GM12878 (cell line): ENCODE measurements at regions of chr1 and their contacts with region 1.

Region 1: GRCh38 chr1:45686317-45687013 is at the start of gene GPBP1L1:
- DNase-seq: peak; percentile 88
- ATAC-seq: peak; percentile 81
- H3K4me3 ChIP-seq: peak within 1 kb of the TSS; percentile 98
- H3K27ac ChIP-seq: peak within 1 kb of the TSS; percentile 100
- H3K4me1 ChIP-seq: peaks cover 3% of the 10 kb centered on the region; the same call in 1 of the 2 replicates
- H3K27me3 ChIP-seq: no peaks in the 10 kb centered on the region
- CTCF ChIP-seq: no peak
- EP300 ChIP-seq: no peak
- POLR2A ChIP-seq: peak; percentile 85
- RAD21 ChIP-seq: no peak
- polyA plus RNA-seq, gene GPBP1L1: 37.3 to 44.0 TPM

Region 2: GRCh38 chr1:45339789-45340570 is 346.5 kb before region 1 on chr1 and contains the starts of genes MUTYH and TOE1:
- CTCF ChIA-PET with region 1: no interaction called
- POLR2A ChIA-PET with region 1: interaction called, 6 read pairs
- RAD21 ChIA-PET with region 1: no interaction called
- SMC1A ChIA-PET with region 1: no interaction called
- in situ Hi-C with region 1: no loop called
- intact Hi-C with region 1: loop called (anchors 2 kb)
- DNase-seq: peak; percentile 73
- ATAC-seq: peak; percentile 92
- H3K4me3 ChIP-seq: peak within 1 kb of the TSS; percentile 71
- H3K27ac ChIP-seq: peak within 1 kb of the TSS; percentile 93
- H3K4me1 ChIP-seq: peaks cover 11% of the 10 kb centered on the region
- H3K27me3 ChIP-seq: no peaks in the 10 kb centered on the region
- CTCF ChIP-seq: no peak
- EP300 ChIP-seq: no peak
- POLR2A ChIP-seq: peak; percentile 97
- RAD21 ChIP-seq: no peak
- polyA plus RNA-seq, gene MUTYH: 2.5 to 10.5 TPM
- polyA plus RNA-seq, gene TOE1: 33.5 to 38.0 TPM

Region 3: DNA sequence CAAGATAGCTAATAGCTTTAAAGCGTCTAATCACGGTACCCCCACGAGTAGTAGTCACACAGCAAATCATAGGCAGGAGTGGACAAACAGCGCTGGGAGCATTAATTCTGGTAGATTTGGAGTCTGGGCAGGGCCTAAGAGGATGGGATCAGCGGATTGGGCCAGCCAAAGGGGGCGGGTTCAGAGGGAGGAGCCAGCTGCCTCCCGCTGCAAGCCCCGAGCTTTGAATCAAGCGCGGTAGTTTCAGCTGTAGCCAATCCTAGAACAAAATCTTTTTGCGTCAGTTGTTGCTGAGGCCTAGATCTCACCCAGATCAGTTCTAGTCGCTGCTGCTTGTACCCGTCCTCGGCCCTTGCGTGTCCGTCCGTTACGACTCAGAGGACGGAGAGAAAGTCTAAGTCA is 103.2 kb before region 1 on chr1:
- CTCF ChIA-PET with region 1: no interaction called
- POLR2A ChIA-PET with region 1: interaction called, 18 read pairs
- RAD21 ChIA-PET with region 1: interaction called, 16 read pairs
- SMC1A ChIA-PET with region 1: no interaction called
- in situ Hi-C with region 1: no loop called
- intact Hi-C with region 1: loop called (anchors 2 kb)
- DNase-seq: peak; percentile 98
- ATAC-seq: peak; percentile 89
- H3K4me3 ChIP-seq: peak overlapping the region; percentile 94
- H3K27ac ChIP-seq: peak overlapping the region; percentile 97
- H3K4me1 ChIP-seq: peaks cover 12% of the 10 kb centered on the region; the same call in 1 of the 2 replicates
- H3K27me3 ChIP-seq: no peaks in the 10 kb centered on the region
- CTCF ChIP-seq: no peak
- EP300 ChIP-seq: no peak
- POLR2A ChIP-seq: no peak
- RAD21 ChIP-seq: no peak

Region 4: DNA sequence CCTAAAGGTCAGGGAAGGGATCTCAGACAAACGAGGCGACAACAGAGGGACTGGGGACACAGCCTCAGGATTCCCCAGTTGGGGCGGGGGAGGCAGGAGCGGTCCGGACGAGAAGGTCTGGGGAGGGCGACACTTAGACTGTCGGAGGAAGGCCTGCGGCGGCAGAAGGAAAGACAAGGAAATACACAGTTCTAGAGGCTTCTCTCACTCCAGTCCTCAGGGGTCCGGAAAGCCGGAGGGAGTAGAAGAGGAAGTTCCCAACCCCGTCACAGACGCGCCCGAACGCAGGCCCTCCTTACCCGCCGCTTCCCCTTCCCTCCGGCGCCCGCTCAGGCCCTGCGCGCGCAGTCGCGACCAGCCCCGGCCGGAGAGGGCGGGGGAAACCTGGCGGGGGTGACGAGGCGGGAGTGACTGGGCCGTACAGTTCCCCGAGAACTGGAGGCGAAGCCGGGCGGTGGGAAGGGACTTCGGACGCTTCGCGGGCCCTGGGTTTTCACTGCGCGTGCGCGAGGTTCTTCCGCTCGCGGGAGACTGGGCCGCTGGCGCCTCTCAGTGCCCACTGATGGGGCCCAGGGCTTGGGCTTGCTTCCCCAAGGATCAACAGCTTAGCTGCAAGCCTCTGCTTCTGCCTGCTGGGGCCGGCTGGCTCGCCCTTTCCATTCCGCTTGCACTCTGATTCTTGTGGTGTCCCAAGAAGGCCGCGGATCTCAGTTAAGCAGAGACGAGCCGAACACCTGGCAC is 64.0 kb after region 1 on chr1 and contains the start of gene IPP:
- CTCF ChIA-PET with region 1: interaction called, 7 read pairs
- POLR2A ChIA-PET with region 1: interaction called, 4 read pairs
- RAD21 ChIA-PET with region 1: interaction called, 4 read pairs
- SMC1A ChIA-PET with region 1: interaction called, 5 read pairs
- in situ Hi-C with region 1: no loop called
- intact Hi-C with region 1: loop called (anchors 1 kb)
- DNase-seq: peak; percentile 90
- ATAC-seq: peak; percentile 98
- H3K4me3 ChIP-seq: peak within 1 kb of the TSS; percentile 91
- H3K27ac ChIP-seq: peak within 1 kb of the TSS; percentile 93
- H3K4me1 ChIP-seq: no peaks in the 10 kb centered on the region; the same call in 1 of the 2 replicates
- H3K27me3 ChIP-seq: no peaks in the 10 kb centered on the region
- CTCF ChIP-seq: peak; percentile 25 to 69 (median 31); a peak in 4 of 6 replicates
- EP300 ChIP-seq: no peak
- POLR2A ChIP-seq: peak; percentile 91
- RAD21 ChIP-seq: peak; percentile 51
- polyA plus RNA-seq, gene IPP: 9.5 to 11.2 TPM

Region 5: GRCh38 chr1:45843474-45843905 is 157.0 kb after region 1 on chr1:
- CTCF ChIA-PET with region 1: interaction called, 5 read pairs
- POLR2A ChIA-PET with region 1: no interaction called
- RAD21 ChIA-PET with region 1: interaction called, 9 read pairs
- SMC1A ChIA-PET with region 1: interaction called, 8 read pairs
- in situ Hi-C with region 1: no loop called
- intact Hi-C with region 1: loop called (anchors 2 kb)
- DNase-seq: no peak
- ATAC-seq: peak; percentile 76
- H3K4me3 ChIP-seq: no peak overlapping the region; the same call in 1 of the 2 replicates
- H3K27ac ChIP-seq: peak overlapping the region; percentile 52; the same call in 1 of the 2 replicates
- H3K4me1 ChIP-seq: peaks cover 29% of the 10 kb centered on the region
- H3K27me3 ChIP-seq: no peaks in the 10 kb centered on the region
- CTCF ChIP-seq: peak in 1 of 3 experiments; percentile 35; a peak in 2 of 6 replicates
- EP300 ChIP-seq: no peak
- POLR2A ChIP-seq: no peak
- RAD21 ChIP-seq: peak; percentile 62

Region 6: DNA sequence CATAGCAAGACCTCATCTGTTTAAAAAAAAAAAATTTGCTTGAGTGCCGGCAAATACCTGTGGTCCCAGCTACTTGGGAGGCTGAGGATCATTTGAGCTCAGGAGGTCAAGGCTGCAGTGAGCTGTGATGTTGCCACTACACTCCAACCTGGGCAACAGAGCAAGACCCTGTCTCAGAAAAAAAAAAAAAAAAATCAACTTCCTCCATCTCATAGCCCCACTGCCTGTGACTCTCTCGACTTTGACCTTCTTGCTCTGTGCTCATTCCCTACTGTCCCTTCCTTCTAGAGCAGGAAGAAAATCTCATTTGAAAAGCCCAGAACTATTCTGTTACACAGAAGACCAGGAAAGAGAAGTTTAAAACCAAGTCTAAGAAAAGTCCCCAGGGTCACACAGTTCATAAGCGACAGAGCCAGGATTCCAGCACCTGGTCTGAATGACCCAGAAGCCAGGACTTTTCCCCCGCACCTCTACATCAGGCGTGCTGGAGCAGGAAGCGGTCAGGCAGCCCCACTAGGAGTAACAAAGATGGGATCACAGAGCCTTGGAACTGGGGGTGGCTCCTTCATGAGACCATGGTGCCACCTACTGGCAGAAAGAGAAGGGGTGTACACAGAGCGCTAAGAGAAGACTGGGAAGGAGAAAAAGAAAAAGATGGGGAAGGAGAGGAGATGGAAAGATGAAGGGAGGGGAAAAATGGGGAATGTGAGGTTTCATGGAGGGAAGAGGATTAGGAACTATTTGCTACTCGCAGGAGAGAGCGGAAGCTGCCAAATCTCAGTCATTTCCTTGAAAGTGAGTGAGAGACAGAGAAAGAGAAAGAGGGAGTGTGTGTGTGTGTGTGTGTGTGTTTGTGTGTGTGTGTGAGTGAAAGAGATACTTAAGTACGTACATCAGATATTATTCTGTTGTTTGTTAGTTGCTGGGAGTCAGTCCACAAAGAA is 492.9 kb after region 1 on chr1:
- CTCF ChIA-PET with region 1: no interaction called
- POLR2A ChIA-PET with region 1: no interaction called
- RAD21 ChIA-PET with region 1: no interaction called
- SMC1A ChIA-PET with region 1: interaction called, 3 read pairs
- in situ Hi-C with region 1: no loop called
- intact Hi-C with region 1: loop called (anchors 10 kb)
- DNase-seq: no peak
- ATAC-seq: peak; percentile 88
- H3K4me3 ChIP-seq: no peak overlapping the region
- H3K27ac ChIP-seq: no peak overlapping the region
- H3K4me1 ChIP-seq: peaks cover 18% of the 10 kb centered on the region
- H3K27me3 ChIP-seq: no peaks in the 10 kb centered on the region
- CTCF ChIP-seq: peak; percentile 88 to 94 (median 91); a peak in 5 of 6 replicates
- EP300 ChIP-seq: no peak
- POLR2A ChIP-seq: no peak
- RAD21 ChIP-seq: peak; percentile 99

Region 7: GRCh38 chr1:46705408-46705807 is 1018.9 kb after region 1 on chr1:
- CTCF ChIA-PET with region 1: no interaction called
- POLR2A ChIA-PET with region 1: no interaction called
- RAD21 ChIA-PET with region 1: no interaction called
- SMC1A ChIA-PET with region 1: no interaction called
- in situ Hi-C with region 1: no loop called
- intact Hi-C with region 1: no loop called
- DNase-seq: no peak
- ATAC-seq: no peak
- H3K4me3 ChIP-seq: no peak overlapping the region
- H3K27ac ChIP-seq: no peak overlapping the region
- H3K4me1 ChIP-seq: no peaks in the 10 kb centered on the region
- H3K27me3 ChIP-seq: no peaks in the 10 kb centered on the region
- CTCF ChIP-seq: no peak
- EP300 ChIP-seq: no peak
- POLR2A ChIP-seq: no peak
- RAD21 ChIP-seq: no peak